Adrenal gland (tissue), 19 donors: ENCODE measurements at regions of chr10 and their contacts with region 1.

Region 1: DNA sequence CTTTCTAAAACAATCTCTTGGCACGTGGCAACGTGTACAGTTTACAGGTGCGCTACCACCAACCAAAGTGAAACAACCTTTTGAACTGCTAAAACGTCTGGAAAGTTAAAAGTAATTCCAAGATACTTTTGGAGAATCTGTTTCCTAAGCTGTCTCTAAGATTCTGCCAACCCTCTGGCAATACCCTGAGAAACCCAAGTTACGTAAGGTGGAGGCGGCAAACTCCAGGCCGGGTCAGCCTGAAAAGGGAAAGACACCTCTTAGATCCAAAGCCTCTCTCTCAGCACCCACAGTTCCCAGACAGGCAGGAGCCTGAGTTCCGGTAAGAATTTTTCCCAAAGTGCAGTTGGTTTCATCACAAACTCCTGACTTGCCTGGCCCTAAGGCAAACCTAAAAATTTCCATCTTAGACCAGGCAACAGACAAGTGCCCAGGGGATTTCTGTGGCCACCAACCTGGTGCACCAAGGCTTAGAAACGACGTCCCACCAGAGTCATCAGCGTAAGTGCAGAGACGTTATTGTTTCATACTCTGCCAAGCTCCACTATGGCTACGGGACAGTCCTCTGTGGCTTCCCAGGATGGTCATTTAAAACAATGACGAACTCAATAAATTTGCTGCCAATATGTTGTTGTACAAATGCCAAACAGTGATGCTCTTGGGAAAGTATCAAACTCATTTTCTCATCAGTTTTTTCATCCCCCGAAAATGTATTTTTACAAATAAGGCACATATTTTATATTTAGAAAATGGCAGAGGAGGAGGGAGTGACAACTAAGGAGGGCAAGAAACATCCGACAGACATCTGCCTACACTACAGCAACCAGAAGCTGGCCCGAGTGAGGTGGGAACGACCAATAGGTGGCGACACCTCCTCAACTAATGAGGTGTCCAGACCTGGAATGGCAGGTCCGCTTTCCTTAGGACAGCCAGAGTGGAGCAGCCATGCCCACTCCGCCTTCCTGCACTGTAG is 205.8 kb upstream of the FRMD4A start:
- DNase-seq: peak; percentile 60 to 90 (median 64)
- H3K4me3 ChIP-seq: no peak overlapping the region
- H3K27ac ChIP-seq: no peak overlapping the region
- H3K4me1 ChIP-seq: peaks cover 8 to 10% of the 10 kb centered on the region in 2 donors
- H3K27me3 ChIP-seq: no peaks in the 10 kb centered on the region
- CTCF ChIP-seq: peak; percentile 27 to 60 (median 50)
- POLR2A ChIP-seq: no peak

Region 2: DNA sequence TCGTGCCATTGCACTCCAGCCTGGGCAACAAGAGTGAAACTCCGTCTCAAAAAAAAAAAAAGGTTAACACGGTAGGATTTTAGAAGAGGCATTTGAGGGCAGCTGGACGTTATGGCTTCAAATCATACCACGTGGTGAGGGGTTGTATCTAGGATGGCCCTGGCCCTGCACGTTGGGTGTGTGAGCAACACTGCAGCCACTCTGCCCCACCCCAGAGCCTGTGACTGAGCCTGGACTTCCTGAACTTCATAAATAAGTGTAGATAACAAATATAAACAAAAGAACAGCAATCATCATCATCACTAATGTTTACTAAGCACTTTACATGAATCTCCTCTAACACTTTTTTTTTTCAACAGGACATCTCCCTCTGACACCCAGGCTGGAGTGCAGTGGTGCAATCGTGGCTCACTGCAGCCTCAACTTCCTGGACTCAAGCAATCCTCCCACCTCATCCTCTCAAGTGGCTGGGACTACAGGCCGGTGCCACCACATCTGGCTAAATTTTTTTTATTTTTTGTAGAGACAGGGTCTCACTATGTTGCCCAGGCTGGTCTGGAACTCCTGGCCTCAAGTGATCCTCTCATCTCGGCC is 36.3 kb before region 1 on chr10:
- intact Hi-C with region 1: loop called in 1 of 2 experiments (anchors 5 kb)
- DNase-seq: no peak
- H3K4me3 ChIP-seq: no peak overlapping the region
- H3K27ac ChIP-seq: no peak overlapping the region
- H3K4me1 ChIP-seq: no peaks in the 10 kb centered on the region
- H3K27me3 ChIP-seq: no peaks in the 10 kb centered on the region
- CTCF ChIP-seq: no peak
- POLR2A ChIP-seq: no peak

Region 3: DNA sequence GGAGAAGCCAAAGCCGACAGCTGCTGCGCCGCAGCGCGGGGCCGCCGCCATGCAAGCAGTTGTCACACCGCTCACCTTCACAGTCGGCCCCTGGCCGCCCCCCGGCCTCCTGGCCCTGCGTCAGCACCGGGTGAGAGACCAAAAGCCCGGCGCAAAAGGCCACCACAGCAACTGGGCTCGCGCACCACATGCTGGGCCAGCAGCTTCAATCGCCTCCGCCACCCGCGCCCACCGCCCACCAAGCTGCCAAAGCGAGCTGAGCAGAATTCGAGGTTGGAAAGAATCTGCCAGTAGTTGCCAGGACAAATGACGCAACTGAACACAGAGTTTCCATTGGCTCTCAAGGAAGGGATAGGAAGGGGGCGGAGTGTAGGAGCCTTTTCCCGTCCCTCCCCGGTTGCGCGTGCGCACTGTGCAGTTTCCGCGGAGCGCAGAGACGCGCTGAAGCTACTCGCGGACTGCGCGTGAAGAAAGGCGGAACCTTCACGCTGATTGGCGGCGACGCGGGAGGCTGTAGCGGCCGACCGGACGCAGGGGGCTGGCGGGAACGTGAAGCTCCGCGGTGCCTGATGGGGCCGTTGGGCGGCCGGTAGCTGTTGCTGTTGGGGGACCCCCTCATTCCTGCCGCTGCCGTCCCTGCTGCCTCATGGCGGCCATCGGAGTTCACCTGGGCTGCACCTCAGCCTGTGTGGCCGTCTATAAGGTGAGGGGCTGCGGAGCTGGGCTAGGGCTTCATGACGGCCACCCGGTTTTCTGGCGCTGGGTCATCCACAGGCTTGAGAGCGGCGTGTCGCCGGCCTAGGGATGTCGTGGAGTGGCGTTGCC is 301.4 kb after region 1 on chr10 and contains the starts of genes CDNF, HSPA14 and MSANTD7:
- intact Hi-C with region 1: loop called in 1 of 2 experiments (anchors 10 kb)
- DNase-seq: peak; percentile 99 to 100 (median 99)
- H3K4me3 ChIP-seq: peak within 1 kb of the TSS; percentile 55 to 95 (median 81)
- H3K27ac ChIP-seq: peak within 1 kb of the TSS; percentile 70 to 97 (median 96)
- H3K4me1 ChIP-seq: peaks cover 14 to 20% of the 10 kb centered on the region in 2 donors
- H3K27me3 ChIP-seq: no peaks in the 10 kb centered on the region
- CTCF ChIP-seq: peak in 2 of 6 experiments; percentile 11 to 19
- POLR2A ChIP-seq: peak; percentile 81 to 92
- total RNA-seq, gene CDNF: 0.97 to 6.6 (median 2.9) TPM
- total RNA-seq, gene HSPA14: 5.4 to 20.0 (median 11.3) TPM
- total RNA-seq, gene MSANTD7: 4.8 to 14.8 (median 7.6) TPM